ENCODE measurements at regions of chr2 and their contacts with region 1.

Region 1: GRCh38 chr2:148936859-148937450 is 61.9 kb downstream of the KIF5C start:
- DNase-seq: peak; percentile 29
- ATAC-seq: no peak
- H3K4me3 ChIP-seq: no peak overlapping the region
- H3K27ac ChIP-seq: no peak overlapping the region
- H3K4me1 ChIP-seq: no peaks in the 10 kb centered on the region
- H3K27me3 ChIP-seq: no peaks in the 10 kb centered on the region; the same call in 1 of the 2 replicates
- CTCF ChIP-seq: peak; percentile 38

Region 2: GRCh38 chr2:148948868-148949267 is 11.9 kb after region 1 on chr2:
- CTCF ChIA-PET with region 1: interaction called, 12 read pairs
- POLR2A ChIA-PET with region 1: no interaction called
- intact Hi-C with region 1: no loop called
- DNase-seq: no peak
- ATAC-seq: no peak
- H3K4me3 ChIP-seq: no peak overlapping the region
- H3K27ac ChIP-seq: no peak overlapping the region
- H3K4me1 ChIP-seq: no peaks in the 10 kb centered on the region
- H3K27me3 ChIP-seq: peaks cover 25% of the 10 kb centered on the region; the same call in 1 of the 2 replicates
- CTCF ChIP-seq: no peak

Measured in PC-3 (cell line).